Right cardiac atrium (tissue), 5 donors: ENCODE measurements at regions of chr11 and their contacts with region 1.

Region 1: DNA sequence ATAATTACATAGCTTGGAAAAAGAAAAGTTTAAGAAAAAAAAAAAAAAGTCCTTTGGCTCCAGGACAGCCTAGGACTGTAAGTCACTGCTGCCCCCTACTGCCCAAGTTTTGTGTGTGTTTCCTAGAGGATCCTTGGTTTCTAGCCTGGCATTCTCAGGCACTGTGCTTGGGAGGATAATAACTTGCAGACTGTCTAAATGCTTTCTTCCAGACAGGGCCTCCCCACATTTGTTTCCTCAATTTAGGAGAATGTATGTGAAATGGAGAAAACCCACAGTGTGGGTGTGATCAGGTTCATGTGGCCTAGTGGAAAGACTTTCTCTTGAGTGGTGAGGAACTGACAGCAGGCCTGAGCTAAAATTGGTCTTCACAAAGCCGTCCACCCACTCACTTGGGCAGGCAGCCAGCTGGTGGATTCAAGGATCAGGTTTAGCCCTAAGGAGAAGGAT is 191.0 kb downstream of the NAV2 start:
- DNase-seq: peak; percentile 75 to 89 (median 79)
- ATAC-seq: peak; percentile 77 to 79
- H3K4me3 ChIP-seq: no peak overlapping the region
- H3K27ac ChIP-seq: no peak overlapping the region
- H3K4me1 ChIP-seq: peaks cover 2% of the 10 kb centered on the region
- H3K27me3 ChIP-seq: no peaks in the 10 kb centered on the region

Region 2: GRCh38 chr11:19553683-19554333 is 349.8 kb before region 1 on chr11:
- intact Hi-C with region 1: loop called in 3 of 4 experiments (anchors 5 kb)
- DNase-seq: peak; percentile 83 to 93 (median 90)
- ATAC-seq: peak; percentile 73 to 79
- H3K4me3 ChIP-seq: no peak overlapping the region
- H3K27ac ChIP-seq: no peak overlapping the region
- H3K4me1 ChIP-seq: no peaks in the 10 kb centered on the region
- H3K27me3 ChIP-seq: no peaks in the 10 kb centered on the region

Region 3: DNA sequence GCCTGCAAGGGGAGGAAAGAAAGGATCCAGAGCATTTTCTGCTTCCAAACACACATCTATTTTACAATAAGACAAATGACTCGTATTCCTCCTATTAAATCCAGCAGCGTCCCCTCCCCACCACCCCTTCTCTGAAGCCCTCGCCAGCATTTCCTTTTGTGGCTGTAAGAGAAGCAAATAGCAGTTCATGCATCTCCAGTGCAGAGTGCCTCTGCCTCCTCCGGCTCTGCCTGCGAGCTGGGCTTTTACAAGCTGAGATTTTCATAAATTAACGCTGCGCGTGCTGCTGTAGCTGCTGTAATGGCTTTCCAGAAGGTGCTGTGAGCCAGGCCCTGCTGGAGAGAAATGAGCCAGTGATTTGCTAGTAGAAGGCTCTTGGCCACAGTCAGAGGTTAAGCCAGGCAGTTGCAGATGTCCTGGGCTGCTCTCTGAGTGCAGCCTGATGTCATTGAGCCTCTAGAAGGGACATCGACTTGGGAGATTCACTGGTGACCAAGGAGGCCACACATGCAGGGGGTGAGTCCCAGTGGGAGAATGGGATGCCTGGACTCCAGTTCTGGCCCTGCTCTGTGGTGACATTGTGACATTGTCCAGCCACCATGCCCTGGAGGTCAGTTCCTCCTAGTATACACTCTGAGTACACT is 325.5 kb before region 1 on chr11:
- intact Hi-C with region 1: loop called in 1 of 4 experiments (anchors 10 kb)
- DNase-seq: peak; percentile 43 to 77 (median 74)
- ATAC-seq: peak; percentile 74
- H3K4me3 ChIP-seq: no peak overlapping the region
- H3K27ac ChIP-seq: peak overlapping the region; percentile 83
- H3K4me1 ChIP-seq: peaks cover 19% of the 10 kb centered on the region
- H3K27me3 ChIP-seq: no peaks in the 10 kb centered on the region

Region 4: DNA sequence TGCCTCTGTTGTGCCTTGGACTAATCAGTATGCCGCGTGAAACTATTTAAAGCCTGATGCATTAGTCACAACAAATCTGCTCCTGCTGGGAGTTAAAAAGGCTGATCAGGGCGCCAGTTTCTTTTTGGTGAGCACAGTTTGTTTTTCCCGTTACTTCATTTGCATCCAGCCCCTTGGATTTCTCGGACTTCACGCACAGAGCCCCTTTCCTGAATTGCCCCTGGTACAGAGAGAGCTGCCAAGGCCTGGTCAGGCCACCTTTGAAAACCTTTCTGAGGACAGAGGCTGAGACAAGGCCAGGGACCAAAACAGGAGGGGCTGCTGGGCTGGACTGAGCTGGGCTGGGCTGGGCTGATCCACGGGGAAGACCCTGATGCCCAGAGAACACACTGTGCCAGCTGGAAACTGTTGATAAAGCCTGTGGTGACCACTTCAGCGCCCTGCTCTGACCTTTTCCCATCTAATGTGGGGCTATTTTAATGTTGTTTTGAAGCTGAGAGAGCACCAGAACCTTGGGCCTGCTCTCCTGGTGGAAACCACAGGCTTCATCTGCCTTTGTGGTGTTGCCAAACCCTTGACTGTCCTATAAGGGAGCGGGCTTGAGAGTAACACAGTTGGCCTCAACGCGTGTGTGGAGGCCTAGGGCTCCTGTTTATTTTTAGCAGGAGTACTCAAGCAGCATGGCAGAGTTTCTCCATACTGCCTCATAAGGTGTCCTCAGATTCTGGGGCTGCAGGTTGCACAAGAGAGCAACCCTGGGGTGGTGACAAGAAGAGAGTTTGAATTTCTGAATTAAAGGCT is 146.8 kb before region 1 on chr11:
- intact Hi-C with region 1: loop called in 2 of 4 experiments (anchors 10 kb)
- DNase-seq: peak in 1 of 3 donors; percentile 57
- ATAC-seq: peak; percentile 76 to 82
- H3K4me3 ChIP-seq: no peak overlapping the region
- H3K27ac ChIP-seq: peak overlapping the region; percentile 91
- H3K4me1 ChIP-seq: peaks cover 8% of the 10 kb centered on the region
- H3K27me3 ChIP-seq: no peaks in the 10 kb centered on the region

Region 5: DNA sequence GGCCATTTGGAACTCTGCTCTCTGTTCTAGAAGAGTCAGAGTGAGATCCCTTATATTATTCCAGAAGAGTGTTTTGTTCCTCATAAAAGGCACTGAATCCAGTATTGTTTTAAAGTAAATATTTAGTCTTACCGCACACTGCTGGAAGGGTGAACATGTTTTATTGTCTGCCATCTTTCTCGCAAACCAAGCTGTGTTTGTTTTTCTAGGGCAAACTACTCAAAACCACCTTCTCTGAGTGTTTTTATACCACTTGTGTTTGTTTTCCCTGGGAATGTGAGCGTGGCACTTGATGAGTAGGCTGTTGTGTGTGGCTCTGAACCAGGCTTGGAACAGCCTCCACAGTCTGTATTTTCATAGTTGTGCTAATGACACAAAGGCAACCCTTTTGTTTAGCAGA is 166.8 kb after region 1 on chr11:
- intact Hi-C with region 1: no loop called
- DNase-seq: no peak
- ATAC-seq: no peak
- H3K4me3 ChIP-seq: no peak overlapping the region
- H3K27ac ChIP-seq: no peak overlapping the region
- H3K4me1 ChIP-seq: peaks cover under 1% of the 10 kb centered on the region
- H3K27me3 ChIP-seq: no peaks in the 10 kb centered on the region